PC-9 (cell line): ENCODE measurements at regions of chr7 and their contacts with region 1.

Region 1: DNA sequence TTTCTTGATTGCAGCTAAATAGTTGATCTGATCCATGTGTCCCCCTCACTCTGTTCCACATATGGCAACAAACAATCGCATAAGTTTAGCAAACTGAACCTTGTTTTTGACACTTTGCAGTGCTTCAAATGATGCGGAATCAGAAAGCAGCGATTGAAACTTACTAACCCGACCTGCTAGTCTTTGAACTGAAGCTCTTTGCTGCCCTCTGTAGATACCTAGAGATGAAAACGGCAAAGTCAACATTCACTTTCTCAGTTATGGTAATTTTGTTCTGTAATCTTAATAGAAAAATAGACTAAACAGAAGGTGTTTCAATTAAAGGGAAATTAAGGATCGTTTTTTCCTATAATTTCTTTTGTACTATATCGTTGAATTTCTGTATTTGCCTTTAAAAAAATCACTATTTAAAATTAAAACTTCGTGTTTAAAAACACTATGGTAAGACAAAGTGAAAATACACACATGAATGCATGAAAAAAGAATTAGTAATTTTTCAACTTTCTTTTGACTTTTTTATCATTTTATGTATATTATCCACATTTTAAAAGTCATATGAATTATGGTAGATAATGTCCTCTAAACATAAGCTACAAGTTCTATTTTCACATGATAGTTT is 276.5 kb downstream of the MAGI2 start:
- DNase-seq: peak in 1 of 2 experiments; percentile 16
- H3K4me3 ChIP-seq: no peak overlapping the region
- H3K27ac ChIP-seq: no peak overlapping the region
- H3K4me1 ChIP-seq: no peaks in the 10 kb centered on the region
- H3K27me3 ChIP-seq: no peaks in the 10 kb centered on the region
- CTCF ChIP-seq: peak; percentile 73

Region 2: DNA sequence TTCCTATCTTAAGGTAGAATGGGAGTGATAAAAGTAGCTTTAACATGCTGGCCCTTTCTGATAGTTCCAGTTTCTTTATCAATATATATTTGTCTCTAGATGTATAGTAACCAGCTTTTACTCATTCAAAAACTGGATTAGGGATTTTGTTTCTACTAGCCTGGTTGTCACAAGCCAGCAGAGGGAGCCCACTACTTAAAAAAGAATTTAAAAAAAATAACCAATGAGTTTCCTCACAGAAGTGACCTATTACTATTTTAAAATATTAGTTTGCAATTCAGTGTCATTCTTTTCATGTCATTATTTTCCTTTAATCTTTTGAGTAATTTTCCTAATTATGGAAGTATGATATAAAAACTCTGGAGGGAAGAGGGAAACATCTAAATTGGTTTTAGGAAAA is 1236.3 kb before region 1 on chr7:
- CTCF ChIA-PET with region 1: no interaction called
- POLR2A ChIA-PET with region 1: no interaction called
- intact Hi-C with region 1: loop called (anchors 2 kb)
- DNase-seq: peak in 1 of 2 experiments; percentile 31
- H3K4me3 ChIP-seq: no peak overlapping the region
- H3K27ac ChIP-seq: no peak overlapping the region
- H3K4me1 ChIP-seq: no peaks in the 10 kb centered on the region
- H3K27me3 ChIP-seq: no peaks in the 10 kb centered on the region
- CTCF ChIP-seq: peak; percentile 82

Region 3: GRCh38 chr7:78134256-78134655 is 1042.7 kb before region 1 on chr7:
- CTCF ChIA-PET with region 1: interaction called, 3 read pairs
- POLR2A ChIA-PET with region 1: no interaction called
- intact Hi-C with region 1: loop called (anchors 1 kb)
- DNase-seq: peak in 1 of 2 experiments; percentile 10
- H3K4me3 ChIP-seq: no peak overlapping the region
- H3K27ac ChIP-seq: no peak overlapping the region
- H3K4me1 ChIP-seq: no peaks in the 10 kb centered on the region
- H3K27me3 ChIP-seq: peaks cover 9% of the 10 kb centered on the region; the same call in 1 of the 2 replicates
- CTCF ChIP-seq: peak; percentile 46

Region 4: GRCh38 chr7:78510580-78511188 is 666.3 kb before region 1 on chr7:
- CTCF ChIA-PET with region 1: no interaction called
- POLR2A ChIA-PET with region 1: no interaction called
- intact Hi-C with region 1: loop called (anchors 1 kb)
- DNase-seq: peak in 1 of 2 experiments; percentile 40
- H3K4me3 ChIP-seq: no peak overlapping the region
- H3K27ac ChIP-seq: no peak overlapping the region
- H3K4me1 ChIP-seq: no peaks in the 10 kb centered on the region
- H3K27me3 ChIP-seq: no peaks in the 10 kb centered on the region
- CTCF ChIP-seq: peak; percentile 66

Region 5: DNA sequence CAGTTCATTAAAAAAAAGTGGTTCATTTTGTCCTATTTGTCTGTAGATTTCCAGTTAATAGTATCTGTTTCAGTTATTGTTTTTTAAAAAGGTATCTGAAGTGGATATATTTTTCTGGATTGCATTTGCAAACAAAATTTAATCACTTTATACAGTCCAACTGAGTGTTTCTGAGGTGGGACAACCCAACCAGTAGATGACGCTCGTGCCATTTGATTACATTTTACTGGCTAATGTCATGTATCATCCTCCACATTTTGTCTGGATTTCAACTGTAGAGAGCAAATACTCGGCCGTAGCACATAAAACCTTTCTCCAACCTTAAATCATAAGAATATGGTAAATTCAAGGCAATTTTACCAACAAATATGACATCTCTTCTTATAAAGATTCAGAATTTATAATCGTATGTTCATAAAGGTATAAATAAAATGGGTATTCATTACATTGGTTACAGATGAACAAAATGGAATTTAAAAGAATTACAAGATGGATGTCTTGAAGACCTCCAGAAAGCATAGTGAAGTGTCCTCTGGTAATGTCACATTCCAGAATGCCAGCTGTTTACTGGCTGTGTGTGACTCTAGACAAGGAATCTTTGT is 589.4 kb before region 1 on chr7:
- CTCF ChIA-PET with region 1: interaction called, 4 read pairs
- POLR2A ChIA-PET with region 1: no interaction called
- intact Hi-C with region 1: loop called (anchors 1 kb)
- DNase-seq: peak in 1 of 2 experiments; percentile 18
- H3K4me3 ChIP-seq: no peak overlapping the region
- H3K27ac ChIP-seq: no peak overlapping the region
- H3K4me1 ChIP-seq: no peaks in the 10 kb centered on the region
- H3K27me3 ChIP-seq: no peaks in the 10 kb centered on the region
- CTCF ChIP-seq: peak; percentile 53

Region 6: GRCh38 chr7:78939669-78940068 is 237.3 kb before region 1 on chr7:
- CTCF ChIA-PET with region 1: no interaction called
- POLR2A ChIA-PET with region 1: no interaction called
- intact Hi-C with region 1: loop called (anchors 10 kb)
- DNase-seq: no peak
- H3K4me3 ChIP-seq: no peak overlapping the region
- H3K27ac ChIP-seq: no peak overlapping the region
- H3K4me1 ChIP-seq: no peaks in the 10 kb centered on the region
- H3K27me3 ChIP-seq: no peaks in the 10 kb centered on the region
- CTCF ChIP-seq: no peak

Region 7: DNA sequence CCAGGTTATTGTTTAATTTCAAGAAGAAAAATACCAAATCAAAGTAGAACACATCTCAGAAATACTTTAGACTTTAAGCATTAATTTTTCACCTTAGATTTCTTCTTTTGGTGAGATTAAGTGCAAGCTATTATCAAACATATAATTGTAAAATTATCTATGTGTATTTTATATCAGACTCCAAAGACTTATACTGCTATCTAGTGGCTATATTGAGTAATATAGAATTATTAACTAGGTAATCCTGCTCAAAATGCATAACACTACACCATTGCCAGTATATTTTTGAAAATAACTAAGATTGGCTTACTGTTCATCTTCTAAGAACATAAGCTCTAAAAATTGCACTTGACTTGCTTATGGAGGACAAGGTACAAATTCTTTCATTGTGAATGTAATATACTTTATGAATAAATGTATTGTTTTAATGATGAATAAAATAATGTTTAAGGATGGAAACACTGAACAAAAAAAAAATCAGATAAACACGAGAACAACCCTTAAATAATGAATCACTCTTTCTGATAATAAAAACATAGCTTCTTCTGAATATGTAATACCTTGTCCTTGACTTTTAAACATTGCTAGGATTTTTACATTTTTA is 871.0 kb after region 1 on chr7:
- CTCF ChIA-PET with region 1: no interaction called
- POLR2A ChIA-PET with region 1: no interaction called
- intact Hi-C with region 1: loop called (anchors 10 kb)
- DNase-seq: no peak
- H3K4me3 ChIP-seq: no peak overlapping the region
- H3K27ac ChIP-seq: no peak overlapping the region
- H3K4me1 ChIP-seq: no peaks in the 10 kb centered on the region
- H3K27me3 ChIP-seq: no peaks in the 10 kb centered on the region
- CTCF ChIP-seq: peak; percentile 75